ENCODE measurements at regions of chr7 and their contacts with region 1.

Region 1: GRCh38 chr7:6385110-6385971 is 62.4 kb downstream of the DAGLB start:
- DNase-seq: peak; percentile 90
- ATAC-seq: peak; percentile 78
- H3K4me3 ChIP-seq: peak overlapping the region in 1 of 2 experiments; percentile 40; a peak in 2 of 4 replicates
- H3K27ac ChIP-seq: peak overlapping the region; percentile 75
- H3K4me1 ChIP-seq: peaks cover 58% of the 10 kb centered on the region
- H3K27me3 ChIP-seq: no peaks in the 10 kb centered on the region
- CTCF ChIP-seq: no peak

Region 2: GRCh38 chr7:6071406-6071805 is 313.9 kb before region 1 on chr7:
- CTCF ChIA-PET with region 1: no interaction called
- POLR2A ChIA-PET with region 1: no interaction called
- in situ Hi-C with region 1: no loop called
- intact Hi-C with region 1: no loop called
- DNase-seq: no peak
- ATAC-seq: no peak
- H3K4me3 ChIP-seq: no peak overlapping the region
- H3K27ac ChIP-seq: no peak overlapping the region
- H3K4me1 ChIP-seq: no peaks in the 10 kb centered on the region
- H3K27me3 ChIP-seq: no peaks in the 10 kb centered on the region
- CTCF ChIP-seq: no peak

Region 3: GRCh38 chr7:6154542-6155404 is 230.6 kb before region 1 on chr7:
- CTCF ChIA-PET with region 1: no interaction called
- POLR2A ChIA-PET with region 1: interaction called, 14 read pairs
- in situ Hi-C with region 1: no loop called
- intact Hi-C with region 1: no loop called
- DNase-seq: no peak
- ATAC-seq: 0 out of 2 replicates have a peak, but pooled peaks have one; percentile 10
- H3K4me3 ChIP-seq: no peak overlapping the region
- H3K27ac ChIP-seq: no peak overlapping the region
- H3K4me1 ChIP-seq: no peaks in the 10 kb centered on the region
- H3K27me3 ChIP-seq: no peaks in the 10 kb centered on the region
- CTCF ChIP-seq: no peak

Region 4: DNA sequence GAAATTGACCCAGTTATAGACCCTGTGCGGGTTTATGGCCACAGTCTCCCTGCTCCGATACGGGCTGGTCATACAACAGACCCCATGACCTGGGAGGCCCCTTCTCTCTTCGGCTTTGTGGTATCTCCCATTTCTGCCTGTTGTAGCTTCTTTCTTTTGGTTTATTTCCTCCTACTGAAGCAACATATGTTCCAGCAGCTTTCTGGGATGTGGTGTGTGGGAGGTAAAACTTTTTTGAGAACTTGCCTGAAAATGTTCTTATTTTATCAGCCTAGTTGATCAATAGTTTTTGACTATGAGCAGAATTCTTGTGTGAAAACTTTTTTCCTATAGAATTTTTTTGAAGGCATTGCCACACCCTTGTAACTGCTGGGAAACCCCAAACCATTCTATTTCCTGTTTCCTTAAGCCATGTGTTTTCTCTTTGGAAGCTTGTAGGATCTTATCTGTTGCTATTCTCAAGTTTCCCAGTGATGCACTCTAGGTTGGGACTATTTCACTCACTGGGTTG is 17.6 kb before region 1 on chr7:
- CTCF ChIA-PET with region 1: no interaction called
- POLR2A ChIA-PET with region 1: interaction called, 13 read pairs
- in situ Hi-C with region 1: no loop called
- intact Hi-C with region 1: no loop called
- DNase-seq: no peak
- ATAC-seq: peak; percentile 59; the same call in 1 of the 2 replicates
- H3K4me3 ChIP-seq: no peak overlapping the region
- H3K27ac ChIP-seq: no peak overlapping the region
- H3K4me1 ChIP-seq: peaks cover 6% of the 10 kb centered on the region; the same call in 1 of the 2 replicates
- H3K27me3 ChIP-seq: no peaks in the 10 kb centered on the region
- CTCF ChIP-seq: no peak

Region 5: DNA sequence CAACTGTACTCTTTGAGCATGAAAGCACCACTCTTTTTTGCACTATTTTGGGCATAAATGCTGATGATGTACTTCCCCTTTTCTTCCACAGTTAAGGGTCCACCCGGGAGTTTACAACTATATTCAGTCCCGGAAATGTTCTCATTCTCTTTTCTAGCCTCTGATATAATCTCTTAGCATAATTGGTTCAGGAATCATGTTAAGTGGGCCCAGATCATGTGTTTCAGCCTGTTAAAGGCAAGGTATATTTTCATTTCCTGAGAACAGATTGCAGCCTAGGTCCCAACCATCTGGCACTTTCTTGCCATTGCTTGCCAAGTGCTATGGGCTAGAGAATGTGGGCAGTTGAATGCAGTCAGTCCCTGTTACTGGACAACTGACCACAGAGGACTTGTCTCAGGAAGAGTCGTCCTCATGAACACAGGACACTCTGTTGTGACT is 1471.8 kb after region 1 on chr7:
- CTCF ChIA-PET with region 1: no interaction called
- POLR2A ChIA-PET with region 1: no interaction called
- in situ Hi-C with region 1: no loop called
- intact Hi-C with region 1: no loop called
- DNase-seq: no peak
- ATAC-seq: no peak
- H3K4me3 ChIP-seq: no peak overlapping the region
- H3K27ac ChIP-seq: no peak overlapping the region
- H3K4me1 ChIP-seq: no peaks in the 10 kb centered on the region
- H3K27me3 ChIP-seq: no peaks in the 10 kb centered on the region
- CTCF ChIP-seq: no peak